ENCODE measurements at regions of chr9 and their contacts with region 1.

Region 1: GRCh38 chr9:37485389-37486219 is at the start of gene POLR1E:
- DNase-seq: peak; percentile 90
- H3K4me3 ChIP-seq: peak within 1 kb of the TSS; percentile 85
- H3K27ac ChIP-seq: peak within 1 kb of the TSS; percentile 47
- H3K27me3 ChIP-seq: no peaks in the 10 kb centered on the region
- CTCF ChIP-seq: no peak

Region 2: GRCh38 chr9:37174247-37174646 is 311.4 kb before region 1 on chr9:
- in situ Hi-C with region 1: no loop called
- DNase-seq: peak; percentile 6
- H3K4me3 ChIP-seq: no peak overlapping the region
- H3K27ac ChIP-seq: peak overlapping the region; percentile 56
- H3K27me3 ChIP-seq: no peaks in the 10 kb centered on the region
- CTCF ChIP-seq: no peak

Region 3: GRCh38 chr9:37592108-37592951 is 106.7 kb after region 1 on chr9 and contains the start of gene TOMM5:
- in situ Hi-C with region 1: loop called (anchors 25 kb)
- DNase-seq: peak; percentile 95
- H3K4me3 ChIP-seq: peak within 1 kb of the TSS; percentile 100
- H3K27ac ChIP-seq: peak within 1 kb of the TSS; percentile 81
- H3K27me3 ChIP-seq: no peaks in the 10 kb centered on the region
- CTCF ChIP-seq: no peak

Measured in brain microvascular endothelial cell (primary cell).